Pancreas (tissue), 10 donors: ENCODE measurements at regions of chr10 and their contacts with region 1.

Region 1: DNA sequence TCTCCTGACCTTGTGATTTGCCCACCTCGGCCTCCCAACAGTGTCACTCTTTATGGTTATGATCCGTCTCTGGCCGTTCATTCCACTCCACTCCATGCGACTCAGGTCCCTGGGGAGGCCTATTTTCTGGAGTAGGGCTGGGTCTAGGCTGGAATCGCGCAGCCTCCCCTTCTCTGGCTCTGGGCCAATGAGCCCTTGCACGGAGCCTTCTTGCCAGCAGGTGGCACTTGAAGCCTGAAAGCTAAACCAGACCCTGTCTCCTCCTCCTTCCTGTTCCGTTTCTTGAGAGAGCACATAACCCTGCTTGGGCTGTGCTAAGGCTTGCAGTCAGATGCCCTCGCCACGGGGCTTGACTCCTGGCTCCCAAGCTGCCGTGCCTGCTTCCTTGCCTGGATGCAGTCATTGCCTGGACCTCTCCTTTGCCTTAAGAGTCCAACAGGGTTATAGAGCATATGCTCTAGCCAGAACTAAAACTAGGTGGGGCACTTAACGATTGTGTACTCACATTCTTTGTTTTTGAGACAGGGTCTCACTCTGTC is 9.6 kb upstream of the DNAJB12 start:
- DNase-seq: peak; percentile 74 to 92 (median 89)
- ATAC-seq: peak; percentile 91 to 99 (median 98)
- H3K4me3 ChIP-seq: no peak overlapping the region
- H3K27ac ChIP-seq: no peak overlapping the region
- H3K4me1 ChIP-seq: no peaks in the 10 kb centered on the region
- H3K27me3 ChIP-seq: no peaks in the 10 kb centered on the region
- CTCF ChIP-seq: peak; percentile 78 to 87 (median 80)

Region 2: DNA sequence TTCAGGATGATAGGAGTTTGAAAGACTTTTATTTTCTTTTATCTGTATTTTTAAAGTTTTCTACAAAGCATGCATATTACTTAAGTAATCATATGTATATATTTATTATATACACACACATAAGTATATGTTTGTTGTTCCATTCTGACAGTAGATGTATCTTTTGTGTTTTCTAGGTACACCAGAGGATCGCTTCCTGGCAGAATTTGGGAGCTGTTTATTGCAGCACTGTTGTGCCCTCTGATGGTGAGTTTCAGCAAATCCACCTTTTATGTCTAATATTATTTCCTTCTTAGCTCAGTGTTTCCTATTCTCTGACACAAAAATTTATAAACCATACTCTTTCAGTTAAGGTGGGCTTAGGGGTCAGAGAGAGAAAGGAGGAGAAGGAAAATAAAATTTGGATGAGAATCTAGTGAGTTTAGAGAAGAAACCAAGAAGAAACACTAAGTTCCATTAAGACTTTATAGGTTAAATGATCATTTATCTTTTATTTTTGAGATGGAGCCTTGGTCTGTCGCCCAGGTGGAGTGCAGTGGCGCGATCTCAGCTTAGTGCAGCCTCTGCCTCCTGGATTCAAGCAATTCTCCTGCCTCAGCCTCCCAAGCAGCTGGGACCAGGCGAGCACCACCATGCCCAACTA is 470.0 kb after region 1 on chr10:
- intact Hi-C with region 1: loop called in 2 of 3 experiments (anchors 5 to 10 kb)
- DNase-seq: peak in 3 of 6 donors; percentile 11 to 40 (median 24)
- ATAC-seq: peak; percentile 69 to 91 (median 88)
- H3K4me3 ChIP-seq: no peak overlapping the region
- H3K27ac ChIP-seq: no peak overlapping the region
- H3K4me1 ChIP-seq: peaks cover 3 to 23% (median 23%) of the 10 kb centered on the region in 3 donors
- H3K27me3 ChIP-seq: no peaks in the 10 kb centered on the region
- CTCF ChIP-seq: peak in 3 of 4 donors; percentile 23 to 40 (median 38)

Region 3: GRCh38 chr10:73054286-73054685 is 690.0 kb after region 1 on chr10:
- intact Hi-C with region 1: loop called in 1 of 3 experiments (anchors 10 kb)
- DNase-seq: no peak
- ATAC-seq: no peak
- H3K4me3 ChIP-seq: no peak overlapping the region
- H3K27ac ChIP-seq: no peak overlapping the region
- H3K4me1 ChIP-seq: no peaks in the 10 kb centered on the region
- H3K27me3 ChIP-seq: no peaks in the 10 kb centered on the region
- CTCF ChIP-seq: no peak